IMR-90 (cell line): ENCODE measurements at regions of chr2 and their contacts with region 1.

Region 1: DNA sequence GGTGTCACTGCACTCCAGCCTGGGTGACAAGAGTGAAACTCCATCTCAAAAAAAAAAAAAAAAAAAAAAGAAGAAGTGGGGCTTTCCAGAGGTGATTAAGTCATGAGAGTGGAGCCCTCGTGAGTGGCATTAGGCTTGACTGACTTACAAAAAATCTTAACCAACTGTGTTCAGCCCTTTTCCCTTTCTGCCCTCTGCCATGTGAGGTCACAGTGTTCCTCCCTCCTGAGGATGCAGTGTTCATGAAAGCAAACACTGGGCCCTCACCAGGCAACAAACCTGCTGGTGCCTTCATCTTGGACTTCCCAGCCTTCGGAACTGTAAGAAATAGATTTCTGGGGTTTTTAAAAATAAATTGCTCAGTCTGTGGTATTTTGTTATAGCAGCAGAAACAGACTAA is 37.0 kb upstream of the METTL21A start:
- DNase-seq: no peak
- ATAC-seq: no peak
- H3K4me3 ChIP-seq: no peak overlapping the region
- H3K27ac ChIP-seq: no peak overlapping the region
- H3K4me1 ChIP-seq: no peaks in the 10 kb centered on the region
- H3K27me3 ChIP-seq: no peaks in the 10 kb centered on the region
- CTCF ChIP-seq: no peak
- POLR2A ChIP-seq: no peak
- RAD21 ChIP-seq: no peak

Region 2: GRCh38 chr2:207584952-207585351 is 77.3 kb before region 1 on chr2:
- CTCF ChIA-PET with region 1: no interaction called
- POLR2A ChIA-PET with region 1: no interaction called
- dilution Hi-C with region 1: no loop called
- in situ Hi-C with region 1: no loop called
- intact Hi-C with region 1: no loop called
- DNase-seq: no peak
- ATAC-seq: no peak
- H3K4me3 ChIP-seq: no peak overlapping the region
- H3K27ac ChIP-seq: no peak overlapping the region
- H3K4me1 ChIP-seq: no peaks in the 10 kb centered on the region
- H3K27me3 ChIP-seq: no peaks in the 10 kb centered on the region
- CTCF ChIP-seq: no peak
- POLR2A ChIP-seq: no peak
- RAD21 ChIP-seq: no peak

Region 3: DNA sequence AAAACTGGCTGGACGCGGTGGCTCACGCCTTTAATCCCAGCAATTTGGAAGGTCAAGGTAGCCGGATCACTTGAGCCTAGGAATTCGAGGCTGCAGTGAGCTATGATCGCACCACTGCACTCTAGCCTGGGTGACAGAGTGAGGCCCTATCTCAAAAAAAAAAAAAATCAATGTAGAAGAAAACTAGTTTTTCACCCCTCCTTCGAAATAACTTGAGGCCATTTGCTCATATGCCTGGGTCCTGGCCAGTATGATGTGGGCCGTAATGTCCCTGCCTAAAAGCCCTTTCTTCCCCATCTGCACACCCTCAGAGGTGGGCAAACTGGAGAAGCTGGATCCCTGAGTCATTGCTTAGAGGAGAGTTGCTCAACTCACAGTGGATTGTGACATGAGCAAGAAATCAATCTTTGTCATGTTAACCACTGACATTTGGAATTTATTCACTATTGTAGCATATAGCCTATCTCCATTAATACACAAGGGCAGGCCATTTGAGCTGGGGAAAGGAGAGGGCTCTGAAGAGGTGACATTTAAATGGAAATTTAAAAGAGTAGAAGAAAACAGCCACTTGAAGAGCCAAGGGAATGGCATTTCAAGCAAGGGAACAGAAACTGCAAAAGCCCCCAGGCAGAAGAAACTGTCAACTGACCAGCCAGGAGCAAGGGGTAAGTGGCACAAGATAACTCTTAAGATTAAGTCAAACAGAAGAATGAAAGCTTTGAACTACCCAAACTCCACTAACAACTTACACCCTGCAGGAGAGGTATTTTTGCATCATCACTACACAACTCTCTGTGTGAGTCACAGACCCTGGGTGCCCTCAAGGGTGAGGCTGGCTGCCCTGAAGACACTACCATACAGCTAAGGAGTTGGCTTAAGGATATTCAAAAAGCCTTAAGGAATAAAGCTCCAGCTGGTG is 29.4 kb before region 1 on chr2:
- CTCF ChIA-PET with region 1: interaction called, 5 read pairs
- POLR2A ChIA-PET with region 1: no interaction called
- dilution Hi-C with region 1: no loop called
- in situ Hi-C with region 1: no loop called
- intact Hi-C with region 1: loop called (anchors 5 kb)
- DNase-seq: peak; percentile 58
- ATAC-seq: peak; percentile 89
- H3K4me3 ChIP-seq: no peak overlapping the region
- H3K27ac ChIP-seq: no peak overlapping the region
- H3K4me1 ChIP-seq: peaks cover 7% of the 10 kb centered on the region; the same call in 1 of the 2 replicates
- H3K27me3 ChIP-seq: peaks cover 2% of the 10 kb centered on the region; the same call in 1 of the 2 replicates
- CTCF ChIP-seq: no peak
- POLR2A ChIP-seq: no peak
- RAD21 ChIP-seq: no peak